Activated CD8-positive, alpha-beta memory T cell treated with anti-CD3 and anti-CD28 coated beads, Interleukin-2, amount 10 ng/mL, durations not matched to agents 7 days and 5 days (primary cell): ENCODE measurements at regions of chr15 and their contacts with region 1.

Region 1: DNA sequence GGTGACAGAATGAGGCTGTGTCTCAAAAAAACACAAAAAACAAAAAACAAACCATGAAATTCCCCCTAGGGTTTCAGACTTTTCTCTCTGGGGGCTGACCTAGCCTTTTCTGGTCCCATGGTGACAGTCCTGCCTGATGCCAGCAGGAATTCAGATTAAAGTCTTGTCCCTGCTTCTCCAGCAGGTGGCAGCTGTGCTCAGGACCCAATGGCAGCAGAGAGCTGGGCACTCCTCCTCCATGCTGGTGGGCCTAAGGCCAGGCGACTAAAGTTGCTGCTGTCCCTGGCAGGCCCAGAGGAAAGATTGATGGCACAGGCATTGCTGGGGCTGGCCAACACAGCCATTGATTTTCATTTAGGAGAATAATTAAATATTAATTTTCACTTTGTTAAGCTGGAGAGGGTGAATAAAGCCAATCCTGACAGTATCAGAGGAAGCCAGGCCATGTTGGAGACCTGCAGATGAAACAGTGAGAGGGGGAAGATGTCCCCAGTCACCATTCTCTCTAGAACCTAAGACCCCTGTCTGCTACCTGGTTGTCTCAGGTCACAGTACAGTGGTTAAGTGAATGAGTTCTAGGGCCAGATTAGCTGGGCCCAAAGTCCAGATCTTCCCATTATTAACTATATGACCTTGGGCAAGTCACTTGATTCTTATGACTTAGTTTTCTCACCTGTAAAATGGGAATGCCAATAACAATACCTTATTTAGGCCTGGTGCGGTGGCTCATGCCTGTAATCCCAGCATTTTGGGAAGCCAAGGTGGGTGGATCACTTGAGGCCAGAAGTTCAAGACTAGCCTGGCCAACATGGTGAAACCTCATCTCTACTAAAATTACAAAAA is 7.1 kb downstream of the CELF6 start:
- DNase-seq: peak; percentile 78
- ATAC-seq: peak; percentile 98
- H3K4me3 Mint-ChIP-seq: no peak overlapping the region
- H3K27ac Mint-ChIP-seq: no peak overlapping the region
- H3K4me1 Mint-ChIP-seq: no peaks in the 10 kb centered on the region
- H3K27me3 Mint-ChIP-seq: peaks cover 13% of the 10 kb centered on the region

Region 2: DNA sequence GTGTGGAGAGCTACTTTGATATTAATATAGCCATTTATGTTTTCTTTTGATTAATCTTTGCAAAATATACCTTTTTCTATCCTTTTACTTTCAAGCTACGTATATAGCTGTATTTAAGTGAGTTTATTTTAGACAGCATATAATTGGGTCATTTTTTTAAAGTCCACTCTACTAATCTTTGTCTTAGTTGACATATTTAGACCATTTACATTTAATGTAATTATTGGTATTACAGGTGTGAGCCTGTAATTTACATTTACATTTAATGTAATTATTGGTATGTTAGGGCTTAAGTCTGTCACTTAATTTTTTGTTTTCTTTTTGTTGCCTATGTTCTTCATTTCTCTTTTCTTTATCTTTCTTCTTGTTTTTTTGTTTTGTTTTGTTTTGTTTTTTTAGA is 10.9 kb after region 1 on chr15:
- CTCF ChIA-PET with region 1: interaction called, 12 read pairs
- DNase-seq: no peak
- ATAC-seq: no peak
- H3K4me3 Mint-ChIP-seq: no peak overlapping the region
- H3K27ac Mint-ChIP-seq: no peak overlapping the region
- H3K4me1 Mint-ChIP-seq: peaks cover 12% of the 10 kb centered on the region
- H3K27me3 Mint-ChIP-seq: peaks cover 12% of the 10 kb centered on the region

Region 3: DNA sequence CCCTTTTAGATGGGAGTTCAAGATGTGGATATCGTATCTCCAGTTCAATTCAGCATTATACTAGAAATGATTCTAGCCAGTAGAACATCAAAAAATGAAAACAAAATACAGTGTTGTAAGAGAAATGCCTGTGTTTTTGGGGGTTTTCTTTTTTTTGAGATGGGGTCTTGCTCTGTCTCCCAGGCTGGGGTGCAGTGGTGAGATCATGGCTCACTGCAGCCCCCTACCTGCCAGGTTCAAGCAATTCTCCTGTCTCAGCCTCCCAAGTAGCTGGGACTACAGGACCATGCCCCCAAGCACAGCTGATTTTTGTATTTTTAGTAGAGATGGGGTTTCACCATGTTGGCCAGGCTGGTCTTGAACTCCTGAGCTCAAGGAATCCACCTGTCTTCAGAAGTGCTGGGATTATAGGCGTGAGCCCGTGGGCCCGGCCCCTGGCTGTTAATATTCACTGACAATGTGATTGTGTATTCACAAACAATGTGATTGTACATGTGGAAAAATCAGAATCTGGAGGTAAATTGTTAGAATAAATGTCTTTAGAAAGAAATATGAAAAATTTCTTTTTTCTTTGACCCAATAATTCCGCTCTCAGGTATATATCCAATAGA is 220.3 kb after region 1 on chr15:
- CTCF ChIA-PET with region 1: interaction called, 14 read pairs
- DNase-seq: no peak
- ATAC-seq: peak; percentile 47
- H3K4me3 Mint-ChIP-seq: no peak overlapping the region
- H3K27ac Mint-ChIP-seq: no peak overlapping the region
- H3K4me1 Mint-ChIP-seq: peaks cover 26% of the 10 kb centered on the region
- H3K27me3 Mint-ChIP-seq: no peaks in the 10 kb centered on the region

Region 4: DNA sequence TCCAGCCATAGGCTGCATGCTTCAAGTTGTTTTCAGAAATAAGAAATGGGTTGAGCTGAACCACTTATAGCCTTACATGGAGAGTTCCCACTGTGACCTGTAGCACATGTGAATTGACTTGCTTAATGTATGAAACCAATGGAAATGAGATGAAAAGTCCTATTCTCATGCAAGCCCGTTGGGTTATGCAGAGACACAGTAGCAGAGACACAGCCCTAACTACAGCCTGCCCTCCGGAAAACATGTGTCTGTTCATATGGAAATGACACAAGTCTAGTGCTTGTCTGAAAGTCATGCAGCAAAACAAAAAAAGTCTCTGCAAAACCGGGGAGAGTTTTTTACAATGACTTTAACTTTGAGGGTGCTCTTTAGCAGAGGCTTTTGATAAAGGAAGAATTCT is 358.7 kb after region 1 on chr15:
- CTCF ChIA-PET with region 1: interaction called, 14 read pairs
- DNase-seq: no peak
- ATAC-seq: no peak
- H3K4me3 Mint-ChIP-seq: no peak overlapping the region
- H3K27ac Mint-ChIP-seq: no peak overlapping the region
- H3K4me1 Mint-ChIP-seq: peaks cover 4% of the 10 kb centered on the region
- H3K27me3 Mint-ChIP-seq: peaks cover 20% of the 10 kb centered on the region